ENCODE measurements at regions of chr21 and their contacts with region 1.

Region 1: DNA sequence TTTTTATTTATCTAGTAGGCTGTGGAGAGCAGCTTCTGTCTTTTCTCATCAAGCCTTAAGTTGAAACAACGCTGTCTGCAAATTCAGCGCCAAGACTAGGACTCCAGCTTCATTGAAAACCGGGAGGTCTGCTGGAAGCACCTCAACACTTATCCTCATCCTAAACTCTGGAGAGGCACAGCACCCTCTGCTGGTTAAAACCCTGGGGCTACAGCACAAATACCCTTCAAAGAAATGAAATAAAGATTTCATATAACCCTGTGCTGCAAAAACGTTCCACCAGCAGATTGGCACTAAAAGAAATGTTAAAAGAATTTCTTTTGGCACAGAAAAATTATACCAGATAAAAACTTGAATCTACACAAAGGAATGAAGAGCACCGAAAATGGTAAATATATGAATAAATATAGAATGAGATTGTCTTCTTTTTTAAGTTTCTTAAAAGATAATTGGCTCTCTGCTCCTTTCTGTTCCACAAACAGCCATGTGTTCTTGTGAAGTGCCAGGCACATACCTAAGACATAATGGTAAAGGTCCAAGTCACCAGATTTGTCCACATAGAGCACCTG is 227.7 kb upstream of the SAMSN1 start:
- DNase-seq: peak; percentile 50
- H3K4me3 Mint-ChIP-seq: no peak overlapping the region
- H3K27ac Mint-ChIP-seq: no peak overlapping the region
- H3K4me1 Mint-ChIP-seq: no peaks in the 10 kb centered on the region
- H3K27me3 Mint-ChIP-seq: no peaks in the 10 kb centered on the region
- CTCF ChIP-seq: peak; percentile 17

Region 2: GRCh38 chr21:14403681-14404318 is 370.1 kb before region 1 on chr21:
- CTCF ChIA-PET with region 1: no interaction called
- intact Hi-C with region 1: loop called (anchors 5 kb)
- DNase-seq: peak; percentile 6
- H3K4me3 Mint-ChIP-seq: no peak overlapping the region
- H3K27ac Mint-ChIP-seq: no peak overlapping the region
- H3K4me1 Mint-ChIP-seq: no peaks in the 10 kb centered on the region
- H3K27me3 Mint-ChIP-seq: no peaks in the 10 kb centered on the region
- CTCF ChIP-seq: no peak

Region 3: DNA sequence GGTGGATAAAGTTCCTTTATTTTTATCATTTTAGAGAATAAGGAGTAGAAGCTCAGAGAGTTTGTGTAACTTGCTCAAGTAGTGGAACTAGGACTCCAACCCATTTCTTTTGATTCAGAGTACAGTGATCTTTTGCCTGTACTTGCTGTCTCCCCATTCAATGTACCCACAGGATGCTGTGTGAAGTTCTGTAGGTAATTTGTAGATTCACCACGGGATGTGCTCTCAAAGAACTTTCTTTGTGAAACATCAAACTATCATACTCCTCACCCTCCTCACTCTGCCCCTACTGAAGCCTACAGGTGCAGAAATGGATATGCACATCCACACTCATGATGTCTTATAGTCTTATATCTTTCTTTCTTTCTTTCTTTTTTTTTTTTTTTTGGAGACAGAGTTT is 325.1 kb before region 1 on chr21:
- CTCF ChIA-PET with region 1: no interaction called
- intact Hi-C with region 1: loop called (anchors 10 kb)
- DNase-seq: no peak
- H3K4me3 Mint-ChIP-seq: no peak overlapping the region
- H3K27ac Mint-ChIP-seq: no peak overlapping the region
- H3K4me1 Mint-ChIP-seq: no peaks in the 10 kb centered on the region
- H3K27me3 Mint-ChIP-seq: no peaks in the 10 kb centered on the region
- CTCF ChIP-seq: no peak

Region 4: DNA sequence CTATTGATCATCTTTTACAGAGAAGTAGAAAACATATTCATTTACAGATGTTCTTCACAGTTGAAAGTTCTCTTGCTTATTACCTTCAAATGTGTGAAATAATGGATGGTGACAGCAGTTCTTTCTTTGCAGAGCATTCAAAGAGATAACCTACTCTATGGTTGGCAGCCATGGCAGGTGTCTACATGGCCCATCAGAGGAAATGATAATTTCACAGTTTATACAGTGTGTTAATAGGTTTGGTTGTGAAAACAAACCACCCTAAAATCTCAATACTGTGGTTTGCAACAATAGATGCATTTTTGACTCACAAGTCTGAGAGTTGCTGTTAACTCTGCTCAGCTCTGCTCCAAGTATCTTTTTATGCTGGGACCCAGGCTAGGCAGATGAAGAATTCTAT is 13.5 kb after region 1 on chr21:
- CTCF ChIA-PET with region 1: no interaction called
- intact Hi-C with region 1: no loop called
- DNase-seq: no peak
- H3K4me3 Mint-ChIP-seq: no peak overlapping the region
- H3K27ac Mint-ChIP-seq: no peak overlapping the region
- H3K4me1 Mint-ChIP-seq: no peaks in the 10 kb centered on the region
- H3K27me3 Mint-ChIP-seq: no peaks in the 10 kb centered on the region
- CTCF ChIP-seq: no peak

Measured in Calu3 (cell line).